Activated T-helper 1 cell treated with anti-CD3 and anti-CD28 coated beads, Interleukin-12 subunit alpha, Interleukin-12 subunit beta, Interleukin-2, Interleukin-4 antibody, amounts not matched to agents 30 ng/mL and 10 ng/mL and 1 ng/mL, durations not matched to agents 14 hours and 24 hours and 36 hours (primary cell): ENCODE measurements at regions of chr6 and their contacts with region 1.

Region 1: GRCh38 chr6:110682460-110682853 is 132.8 kb downstream of the CDK19 start:
- DNase-seq: peak; percentile 63
- H3K4me3 Mint-ChIP-seq: no peak overlapping the region
- H3K27ac Mint-ChIP-seq: no peak overlapping the region
- H3K4me1 Mint-ChIP-seq: peaks cover 20% of the 10 kb centered on the region
- H3K27me3 Mint-ChIP-seq: no peaks in the 10 kb centered on the region

Region 2: GRCh38 chr6:110467566-110468140 is 214.8 kb before region 1 on chr6:
- intact Hi-C with region 1: no loop called
- DNase-seq: no peak
- H3K4me3 Mint-ChIP-seq: no peak overlapping the region
- H3K27ac Mint-ChIP-seq: no peak overlapping the region
- H3K4me1 Mint-ChIP-seq: no peaks in the 10 kb centered on the region
- H3K27me3 Mint-ChIP-seq: peaks cover 14% of the 10 kb centered on the region

Region 3: GRCh38 chr6:110528101-110528929 is 154.1 kb before region 1 on chr6:
- intact Hi-C with region 1: loop called (anchors 1 kb)
- DNase-seq: peak; percentile 24
- H3K4me3 Mint-ChIP-seq: no peak overlapping the region
- H3K27ac Mint-ChIP-seq: no peak overlapping the region
- H3K4me1 Mint-ChIP-seq: peaks cover 9% of the 10 kb centered on the region
- H3K27me3 Mint-ChIP-seq: peaks cover 8% of the 10 kb centered on the region

Region 4: GRCh38 chr6:110944681-110945151 is 262.3 kb after region 1 on chr6:
- intact Hi-C with region 1: loop called (anchors 1 kb)
- DNase-seq: peak; percentile 40
- H3K4me3 Mint-ChIP-seq: no peak overlapping the region
- H3K27ac Mint-ChIP-seq: peak overlapping the region; percentile 80
- H3K4me1 Mint-ChIP-seq: peaks cover 11% of the 10 kb centered on the region
- H3K27me3 Mint-ChIP-seq: no peaks in the 10 kb centered on the region

Region 5: DNA sequence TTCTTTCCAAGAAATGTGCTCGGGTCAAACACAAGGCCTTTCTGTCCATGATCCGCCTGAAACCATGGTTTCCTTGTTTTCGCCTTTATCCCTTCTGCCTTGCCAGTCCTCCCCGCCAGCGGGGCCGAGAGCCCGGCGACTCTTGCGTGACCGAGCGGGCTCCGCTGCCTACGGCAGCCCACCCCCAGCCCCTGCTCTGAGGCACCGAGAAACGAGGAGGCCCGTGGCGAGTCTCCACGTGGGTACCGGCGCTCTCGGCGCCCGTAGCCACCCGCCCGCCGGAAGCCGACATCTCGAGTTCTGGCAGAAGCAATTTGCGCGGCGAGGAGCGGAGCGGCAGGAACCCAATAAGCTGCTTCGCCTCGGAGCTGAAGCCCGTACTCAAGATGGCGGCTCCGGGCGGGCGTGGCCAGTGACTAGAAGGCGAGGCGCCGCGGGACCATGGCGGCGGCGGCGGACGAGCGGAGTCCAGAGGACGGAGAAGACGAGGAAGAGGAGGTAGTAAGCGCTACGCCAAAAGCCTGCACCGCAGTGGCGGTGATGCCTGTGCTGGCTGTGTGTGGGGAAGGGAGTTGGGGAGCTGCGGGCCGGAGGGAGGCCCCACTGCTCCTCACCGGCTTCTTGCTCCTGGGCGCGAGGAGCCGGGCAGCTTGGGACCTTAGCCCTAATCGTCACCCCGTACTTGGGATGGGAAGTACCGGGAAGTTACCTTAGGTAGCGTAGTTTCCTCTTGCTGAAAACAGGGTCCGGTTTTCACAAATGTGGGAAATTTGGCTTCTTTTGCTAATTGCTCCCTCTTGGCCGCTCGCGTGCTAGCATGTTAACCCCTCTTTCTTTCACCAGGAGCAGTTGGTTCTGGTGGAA is 276.1 kb after region 1 on chr6 and contains the start of gene GTF3C6:
- intact Hi-C with region 1: loop called (anchors 2 kb)
- DNase-seq: peak; percentile 93
- H3K4me3 Mint-ChIP-seq: peak within 1 kb of the TSS; percentile 100
- H3K27ac Mint-ChIP-seq: peak within 1 kb of the TSS; percentile 99
- H3K4me1 Mint-ChIP-seq: peaks cover 16% of the 10 kb centered on the region
- H3K27me3 Mint-ChIP-seq: peaks cover 2% of the 10 kb centered on the region
- total RNA-seq, gene GTF3C6: 137 TPM in 2 replicates

Region 6: DNA sequence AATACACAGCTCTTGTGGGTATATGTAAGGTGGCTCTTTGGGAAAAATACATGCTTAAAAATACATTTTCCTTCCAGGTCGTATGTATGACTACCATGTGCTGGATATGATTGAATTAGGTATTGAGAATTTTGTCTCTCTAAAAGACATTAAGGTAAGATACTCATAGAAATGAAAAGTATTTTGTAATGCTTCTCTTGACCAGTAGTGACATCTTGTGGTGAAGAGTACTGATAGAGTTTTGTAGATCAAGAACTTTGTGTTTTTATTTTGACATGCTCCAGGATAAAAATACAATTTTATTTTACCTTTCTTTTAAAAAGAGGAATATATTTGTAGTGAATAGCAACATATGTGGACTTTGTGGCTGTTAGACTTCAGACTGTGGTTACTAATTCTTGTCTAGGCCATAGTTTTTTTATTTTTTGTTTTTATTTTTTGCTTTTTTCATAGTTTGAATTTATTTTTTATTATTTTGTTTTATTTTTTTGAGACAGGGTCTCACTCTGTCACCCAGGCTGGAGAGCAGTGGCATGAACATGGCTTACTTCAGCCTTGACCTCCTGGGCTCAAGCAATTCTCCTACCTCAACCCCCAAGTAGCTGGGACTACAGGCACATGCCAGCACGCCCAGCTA is 317.3 kb after region 1 on chr6:
- intact Hi-C with region 1: loop called (anchors 2 kb)
- DNase-seq: no peak
- H3K4me3 Mint-ChIP-seq: no peak overlapping the region
- H3K27ac Mint-ChIP-seq: no peak overlapping the region
- H3K4me1 Mint-ChIP-seq: peaks cover under 1% of the 10 kb centered on the region
- H3K27me3 Mint-ChIP-seq: no peaks in the 10 kb centered on the region